PC-3 (cell line): ENCODE measurements at regions of chr17 and their contacts with region 1.

Region 1: DNA sequence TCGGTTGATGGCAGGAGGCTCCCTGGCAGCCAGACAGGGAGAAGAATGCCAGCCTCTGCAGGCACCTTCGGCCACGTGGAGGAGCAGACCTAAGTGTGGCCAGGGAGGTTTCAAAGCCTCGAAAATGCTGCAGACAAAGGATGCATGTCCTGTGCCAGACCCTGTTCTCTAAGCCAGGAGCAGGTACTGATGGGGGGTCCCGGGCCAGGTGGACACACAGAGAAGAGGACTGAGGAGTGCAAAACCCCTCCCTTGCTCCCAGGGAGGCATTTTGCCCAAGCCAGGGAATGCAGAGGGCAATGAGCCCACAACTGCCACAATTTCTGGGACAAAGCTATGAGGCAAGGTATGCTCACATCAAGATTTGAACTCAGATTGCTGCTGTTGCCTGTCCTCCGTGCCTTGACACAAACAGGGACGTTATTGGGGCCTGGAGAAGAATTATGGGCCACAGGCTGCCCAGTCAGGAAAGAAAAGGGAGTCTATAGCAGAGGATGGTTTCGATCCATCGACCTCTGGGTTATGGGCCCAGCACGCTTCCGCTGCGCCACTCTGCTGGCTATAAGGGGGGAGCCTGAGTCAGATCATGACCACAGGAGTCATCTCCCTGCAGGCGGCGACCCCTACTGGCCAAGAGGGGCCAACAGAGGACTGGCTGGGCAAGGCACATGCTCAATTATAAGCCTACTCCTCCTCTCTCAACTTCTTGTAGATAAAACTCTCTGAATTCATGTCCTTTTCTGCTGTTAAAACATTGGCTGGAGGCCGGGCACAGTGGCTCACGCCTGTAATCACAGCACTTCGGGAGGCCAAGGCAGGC is 25.1 kb upstream of the FOXK2 start:
- DNase-seq: peak; percentile 94
- ATAC-seq: peak; percentile 72
- H3K4me3 ChIP-seq: no peak overlapping the region
- H3K27ac ChIP-seq: peak overlapping the region; percentile 5
- H3K4me1 ChIP-seq: peaks cover 27% of the 10 kb centered on the region
- H3K27me3 ChIP-seq: no peaks in the 10 kb centered on the region
- CTCF ChIP-seq: peak; percentile 85

Region 2: GRCh38 chr17:82332669-82333278 is 161.7 kb before region 1 on chr17:
- CTCF ChIA-PET with region 1: interaction called, 13 read pairs
- POLR2A ChIA-PET with region 1: no interaction called
- intact Hi-C with region 1: no loop called
- DNase-seq: peak; percentile 66
- ATAC-seq: peak; percentile 26
- H3K4me3 ChIP-seq: peak overlapping the region; percentile 76
- H3K27ac ChIP-seq: peak overlapping the region; percentile 68
- H3K4me1 ChIP-seq: peaks cover 40% of the 10 kb centered on the region
- H3K27me3 ChIP-seq: no peaks in the 10 kb centered on the region
- CTCF ChIP-seq: no peak

Region 3: DNA sequence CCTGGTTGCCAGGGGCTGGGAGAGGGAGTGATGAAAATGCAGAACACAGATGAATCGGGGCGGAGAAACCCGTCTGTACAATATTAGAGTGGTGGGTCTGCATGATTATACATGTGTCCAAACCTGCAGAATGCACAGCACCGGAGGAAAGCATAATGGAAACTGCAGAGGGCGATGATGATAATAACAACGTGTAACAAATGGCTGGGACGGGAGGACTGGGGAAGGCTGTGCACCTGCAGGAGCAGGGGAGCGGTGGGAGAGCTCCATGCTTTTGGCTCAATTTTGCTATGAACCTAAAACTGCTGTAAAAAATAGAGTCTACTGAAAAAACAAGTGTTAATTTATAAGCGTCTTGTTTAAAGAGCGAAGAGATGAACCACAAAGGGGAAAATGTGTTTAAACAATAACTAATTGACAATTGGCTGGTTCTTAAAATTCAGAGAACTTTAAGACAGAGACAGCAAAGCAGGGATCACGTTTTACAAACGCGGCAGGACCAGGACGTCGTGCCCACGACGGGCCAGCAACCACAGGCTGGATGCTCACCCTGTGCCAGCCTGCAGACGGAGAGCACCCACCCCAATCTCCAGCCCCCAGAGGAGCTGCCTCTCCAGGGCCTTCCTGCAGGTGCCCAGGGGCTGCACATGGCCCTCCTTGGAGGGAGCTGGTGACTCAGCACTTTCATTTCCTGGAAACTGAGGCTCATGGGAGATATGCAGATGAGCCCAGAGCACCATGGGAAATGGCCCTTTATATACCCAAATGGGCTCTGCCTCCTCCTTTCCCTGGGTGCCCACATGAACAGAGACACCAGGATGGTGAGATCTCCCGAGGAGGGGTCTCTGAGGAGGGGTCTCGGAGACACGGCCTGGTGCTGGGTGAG is 135.7 kb before region 1 on chr17 and contains the start of gene TEX19:
- CTCF ChIA-PET with region 1: no interaction called
- POLR2A ChIA-PET with region 1: interaction called, 15 read pairs
- intact Hi-C with region 1: no loop called
- DNase-seq: peak; percentile 35
- ATAC-seq: no peak; the same call in 1 of the 2 replicates
- H3K4me3 ChIP-seq: no peak within 1 kb of the TSS
- H3K27ac ChIP-seq: peak within 1 kb of the TSS; percentile 40
- H3K4me1 ChIP-seq: peaks cover 11% of the 10 kb centered on the region
- H3K27me3 ChIP-seq: no peaks in the 10 kb centered on the region
- CTCF ChIP-seq: peak; percentile 29; the same call in 1 of the 2 replicates
- total RNA-seq, gene TEX19: 0.46 and 1.2 TPM in 2 replicates

Region 4: DNA sequence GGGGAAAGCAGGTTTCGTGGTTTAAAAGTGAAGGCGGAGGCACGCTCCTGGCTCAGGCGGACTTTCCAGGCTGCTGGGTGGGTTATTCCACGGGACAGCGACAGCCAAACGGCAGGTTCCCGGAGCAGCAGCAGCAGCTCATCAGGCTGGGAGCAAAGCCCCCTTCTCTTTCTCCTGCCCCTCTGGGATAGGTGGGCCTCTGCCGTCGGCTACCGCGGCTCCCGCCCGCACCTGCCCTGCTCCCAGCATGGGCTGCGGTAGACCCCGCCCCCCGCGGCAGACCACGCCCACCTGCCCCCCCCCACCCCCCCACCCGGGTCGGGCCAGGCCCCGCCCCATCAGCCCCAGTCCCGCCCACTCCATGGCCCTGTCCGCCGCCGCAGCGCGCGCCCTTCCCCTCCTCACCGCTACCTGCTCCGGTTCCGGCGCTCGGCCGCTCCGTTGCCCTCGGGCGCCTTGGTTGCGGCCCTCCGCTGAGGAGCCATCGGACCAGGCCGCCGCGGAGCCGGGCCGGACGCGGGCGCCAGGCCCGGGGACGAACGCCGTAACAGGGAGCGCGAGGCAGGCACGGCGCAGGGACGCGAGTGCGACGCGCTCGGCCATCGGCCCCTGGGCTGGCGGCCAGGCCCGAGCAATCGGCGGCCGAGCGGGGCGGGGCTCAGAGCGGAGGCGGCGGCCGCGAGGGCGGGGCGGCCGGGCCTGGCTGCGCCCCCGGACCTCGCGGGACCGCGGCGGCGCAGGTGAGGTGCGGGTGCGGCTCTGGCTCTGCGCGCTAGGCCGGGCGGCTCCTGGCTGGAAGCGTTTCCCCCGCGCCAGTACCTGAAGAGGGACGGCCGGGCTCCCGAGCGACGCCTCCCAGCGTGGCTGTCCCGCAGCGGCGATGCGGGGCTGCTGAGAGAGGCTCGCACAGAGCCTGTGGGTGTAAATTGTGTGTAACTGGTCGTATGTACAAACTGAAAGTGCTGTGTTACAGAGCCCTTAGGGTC is 76.2 kb before region 1 on chr17 and contains the starts of genes HEXD and OGFOD3:
- CTCF ChIA-PET with region 1: no interaction called
- POLR2A ChIA-PET with region 1: no interaction called
- intact Hi-C with region 1: loop called (anchors 10 kb)
- DNase-seq: peak; percentile 91
- ATAC-seq: peak; percentile 82
- H3K4me3 ChIP-seq: peak within 1 kb of the TSS; percentile 97
- H3K27ac ChIP-seq: peak within 1 kb of the TSS; percentile 42; the same call in 1 of the 2 replicates
- H3K4me1 ChIP-seq: peaks cover 11% of the 10 kb centered on the region
- H3K27me3 ChIP-seq: no peaks in the 10 kb centered on the region
- CTCF ChIP-seq: no peak
- total RNA-seq, gene HEXD: 12.7 and 18.3 TPM in 2 replicates
- total RNA-seq, gene OGFOD3: 56.1 and 79.2 TPM in 2 replicates

Region 5: GRCh38 chr17:82517230-82517865 is 22.9 kb after region 1 on chr17:
- CTCF ChIA-PET with region 1: no interaction called
- POLR2A ChIA-PET with region 1: no interaction called
- intact Hi-C with region 1: no loop called
- DNase-seq: no peak
- ATAC-seq: no peak
- H3K4me3 ChIP-seq: no peak overlapping the region
- H3K27ac ChIP-seq: no peak overlapping the region
- H3K4me1 ChIP-seq: peaks cover 5% of the 10 kb centered on the region; the same call in 1 of the 2 replicates
- H3K27me3 ChIP-seq: no peaks in the 10 kb centered on the region
- CTCF ChIP-seq: no peak

Region 6: DNA sequence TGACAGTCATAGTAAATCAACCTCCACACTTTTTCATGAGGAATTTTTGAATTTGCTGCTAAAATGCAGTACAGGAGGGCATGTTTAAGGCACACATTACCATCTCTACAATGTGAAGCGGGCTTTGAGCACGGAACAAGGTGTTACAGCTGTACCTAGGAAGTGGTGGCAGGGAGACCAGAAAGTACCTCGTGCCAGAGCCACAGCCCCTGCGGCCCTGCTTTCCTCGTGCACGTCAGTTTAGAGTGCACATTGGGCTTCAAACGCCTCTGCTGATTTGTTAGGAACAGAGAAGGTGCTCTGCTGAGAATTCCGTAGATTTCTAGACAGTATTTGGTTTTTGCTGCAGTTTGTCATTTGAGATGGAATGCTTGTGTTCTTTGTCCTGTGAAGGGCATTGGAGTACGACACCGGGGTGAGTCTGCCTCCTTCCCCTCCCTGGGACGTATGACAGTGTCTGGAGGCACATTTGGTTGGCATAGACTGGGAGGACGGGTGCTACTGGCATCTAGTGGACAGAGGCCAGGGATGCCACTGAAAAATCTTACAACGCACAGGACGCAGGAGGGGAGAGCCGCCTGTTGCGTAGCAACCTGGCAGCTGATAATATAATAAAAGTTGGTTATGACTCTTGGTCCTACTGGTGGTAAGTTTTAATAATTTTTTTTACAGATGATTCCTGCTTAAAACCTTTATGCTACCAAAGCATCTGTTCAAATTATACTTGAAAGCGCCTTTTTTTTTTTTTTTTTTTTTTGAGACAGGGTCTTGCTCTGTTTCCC is 34.2 kb after region 1 on chr17:
- CTCF ChIA-PET with region 1: interaction called, 3 read pairs
- POLR2A ChIA-PET with region 1: no interaction called
- intact Hi-C with region 1: loop called (anchors 2 kb)
- DNase-seq: peak; percentile 93
- ATAC-seq: peak; percentile 78
- H3K4me3 ChIP-seq: peak overlapping the region; percentile 16; the same call in 1 of the 2 replicates
- H3K27ac ChIP-seq: peak overlapping the region; percentile 70
- H3K4me1 ChIP-seq: peaks cover 48% of the 10 kb centered on the region
- H3K27me3 ChIP-seq: no peaks in the 10 kb centered on the region
- CTCF ChIP-seq: peak; percentile 84

Region 7: GRCh38 chr17:82551779-82552457 is 57.5 kb after region 1 on chr17:
- CTCF ChIA-PET with region 1: interaction called, 4 read pairs
- POLR2A ChIA-PET with region 1: no interaction called
- intact Hi-C with region 1: loop called (anchors 2 kb)
- DNase-seq: peak; percentile 77
- ATAC-seq: peak; percentile 91
- H3K4me3 ChIP-seq: no peak overlapping the region
- H3K27ac ChIP-seq: no peak overlapping the region
- H3K4me1 ChIP-seq: peaks cover 13% of the 10 kb centered on the region
- H3K27me3 ChIP-seq: no peaks in the 10 kb centered on the region
- CTCF ChIP-seq: peak; percentile 84